ENCODE measurements at regions of chr4 and their contacts with region 1.

Region 1: DNA sequence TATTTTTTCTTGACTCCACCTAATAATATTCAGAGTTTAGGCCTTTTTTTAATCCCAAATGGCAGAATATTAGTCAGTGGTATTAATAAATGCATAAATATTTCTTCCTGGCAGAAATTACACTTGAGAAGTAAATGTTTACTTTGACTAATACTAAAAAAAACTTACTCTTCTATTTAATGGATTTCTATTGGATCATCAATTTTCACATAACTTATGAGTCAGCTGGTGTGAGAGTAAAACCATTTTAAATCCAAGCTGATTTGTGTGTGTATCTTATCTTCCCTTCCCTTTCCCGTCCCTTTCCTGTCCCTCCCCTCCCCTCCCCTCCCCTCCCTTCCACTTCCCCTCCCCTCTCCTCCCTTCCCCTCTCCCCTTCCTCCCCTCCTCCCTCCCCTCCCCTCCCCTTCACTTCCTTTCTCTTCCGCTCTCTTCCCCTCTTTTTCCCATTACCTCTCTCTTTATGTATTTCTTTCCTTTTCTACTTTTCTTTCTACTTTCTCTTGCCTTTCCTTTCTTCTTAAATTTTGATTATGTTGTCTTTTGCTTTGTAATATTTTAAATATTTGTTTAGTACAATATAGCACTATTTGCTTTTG is 630.1 kb upstream of the EPHA5 start:
- DNase-seq: no peak

Region 2: GRCh38 chr4:66223068-66223703 is 77.2 kb before region 1 on chr4:
- intact Hi-C with region 1: loop called in 1 of 2 experiments (anchors 2 kb)
- DNase-seq: no peak

Measured in posterior vena cava (tissue), 2 donors.